CD4-positive, alpha-beta memory T cell (primary cell): ENCODE measurements at regions of chr5 and their contacts with region 1.

Region 1: GRCh38 chr5:39015743-39016586 is 58.2 kb downstream of the RICTOR start:
- DNase-seq: no peak
- H3K4me3 ChIP-seq: no peak overlapping the region
- H3K4me3 Mint-ChIP-seq: peak overlapping the region in 2 of 8 donors; percentile 8 to 54
- H3K27ac ChIP-seq: no peak overlapping the region
- H3K27ac Mint-ChIP-seq: peak overlapping the region in 6 of 7 donors; percentile 0 to 90 (median 61)
- H3K4me1 ChIP-seq: peaks cover 18% of the 10 kb centered on the region
- H3K4me1 Mint-ChIP-seq: peaks cover 31 to 48% (median 36%) of the 10 kb centered on the region in 4 donors
- H3K27me3 ChIP-seq: no peaks in the 10 kb centered on the region
- H3K27me3 Mint-ChIP-seq: no peaks in the 10 kb centered on the region

Region 2: GRCh38 chr5:38979535-38979934 is 36.4 kb before region 1 on chr5:
- CTCF ChIA-PET with region 1: no interaction called
- POLR2A ChIA-PET with region 1: no interaction called
- intact Hi-C with region 1: loop called (anchors 5 kb)
- DNase-seq: no peak
- H3K4me3 ChIP-seq: no peak overlapping the region
- H3K4me3 Mint-ChIP-seq: no peak overlapping the region
- H3K27ac ChIP-seq: no peak overlapping the region
- H3K27ac Mint-ChIP-seq: peak overlapping the region in 1 of 7 donors; percentile 66
- H3K4me1 ChIP-seq: no peaks in the 10 kb centered on the region
- H3K4me1 Mint-ChIP-seq: peaks cover 0 to 9% (median 5%) of the 10 kb centered on the region in 4 donors
- H3K27me3 ChIP-seq: no peaks in the 10 kb centered on the region
- H3K27me3 Mint-ChIP-seq: no peaks in the 10 kb centered on the region